Right cardiac atrium (tissue), 5 donors: ENCODE measurements at regions of chr13 and their contacts with region 1.

Region 1: DNA sequence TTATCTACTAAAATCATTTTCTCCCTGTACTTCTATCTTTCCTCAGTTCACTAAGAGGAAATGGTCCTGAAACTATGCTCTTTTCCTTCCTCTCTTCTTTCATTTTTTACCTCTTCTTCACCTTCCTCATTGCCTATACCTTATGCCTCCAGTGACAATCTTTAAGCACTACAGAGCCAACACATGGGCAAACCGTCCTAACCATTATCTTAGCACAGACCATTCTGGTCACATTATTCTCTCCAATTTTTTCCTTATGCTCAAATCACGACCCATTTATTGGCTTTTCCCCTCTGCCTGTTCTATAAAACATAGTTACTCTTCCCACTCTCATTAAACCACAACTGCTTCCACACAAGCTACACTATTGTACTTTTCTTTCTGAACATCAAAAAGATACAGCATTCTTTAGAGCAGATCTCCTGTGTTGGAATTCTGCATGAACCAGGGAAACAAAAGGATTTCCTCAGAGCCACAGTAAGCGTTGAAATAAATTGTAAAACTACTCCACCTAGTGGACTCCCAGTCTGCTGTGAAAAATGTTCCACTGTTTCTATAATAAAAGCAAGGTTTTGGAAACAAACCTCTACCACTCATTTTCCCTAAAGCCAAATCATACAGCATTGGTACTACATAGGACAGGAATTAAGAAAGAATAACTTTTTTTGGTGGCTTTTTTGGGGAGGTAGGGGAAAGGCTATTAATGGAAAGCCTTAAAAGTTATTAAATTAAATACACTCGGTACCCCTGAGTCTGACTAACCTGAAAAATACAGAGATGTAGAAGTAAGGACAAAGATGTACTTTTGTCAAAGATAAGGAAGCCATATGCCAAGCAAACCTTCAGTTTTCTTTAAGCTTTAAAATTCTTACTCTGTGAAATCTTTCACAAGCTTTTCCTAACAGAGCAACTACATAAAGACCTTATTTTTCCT is 19.5 kb downstream of the NUFIP1 start:
- DNase-seq: no peak
- ATAC-seq: peak; percentile 65 to 76
- H3K4me3 ChIP-seq: no peak overlapping the region
- H3K27ac ChIP-seq: no peak overlapping the region
- H3K4me1 ChIP-seq: no peaks in the 10 kb centered on the region
- H3K27me3 ChIP-seq: no peaks in the 10 kb centered on the region

Region 2: GRCh38 chr13:43905435-43906031 is 1064.3 kb before region 1 on chr13:
- intact Hi-C with region 1: loop called in 1 of 4 experiments (anchors 10 kb)
- DNase-seq: no peak
- ATAC-seq: peak; percentile 64 to 69
- H3K4me3 ChIP-seq: no peak overlapping the region
- H3K27ac ChIP-seq: no peak overlapping the region
- H3K4me1 ChIP-seq: no peaks in the 10 kb centered on the region
- H3K27me3 ChIP-seq: no peaks in the 10 kb centered on the region

Region 3: DNA sequence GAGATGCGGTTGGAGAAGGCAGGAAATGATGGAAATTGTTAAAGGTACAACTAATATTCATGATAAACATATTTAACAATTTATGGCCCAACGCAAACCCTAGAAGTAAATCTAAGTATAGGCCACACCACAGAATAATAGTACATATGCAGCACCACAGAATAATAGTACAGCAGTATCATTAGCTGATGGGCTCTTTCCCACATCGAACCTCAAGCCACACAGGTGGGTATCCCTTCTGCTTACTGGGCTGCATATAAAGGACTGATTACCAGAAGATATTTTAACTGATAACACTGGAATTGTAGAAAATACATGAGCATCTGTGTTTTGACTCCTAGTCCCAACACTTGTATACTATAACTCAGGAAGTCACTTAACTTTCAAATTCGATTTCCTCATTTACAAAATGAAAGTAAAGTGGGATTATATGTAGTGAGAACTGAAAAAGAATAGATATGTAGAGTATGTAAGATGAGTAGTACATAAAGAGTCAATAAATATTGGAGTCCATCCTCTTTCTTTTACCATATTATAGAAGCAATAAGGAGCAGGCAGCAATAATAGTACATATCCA is 485.2 kb before region 1 on chr13:
- intact Hi-C with region 1: loop called (anchors 5 to 10 kb)
- DNase-seq: no peak
- ATAC-seq: no peak
- H3K4me3 ChIP-seq: no peak overlapping the region
- H3K27ac ChIP-seq: no peak overlapping the region
- H3K4me1 ChIP-seq: no peaks in the 10 kb centered on the region
- H3K27me3 ChIP-seq: no peaks in the 10 kb centered on the region

Region 4: DNA sequence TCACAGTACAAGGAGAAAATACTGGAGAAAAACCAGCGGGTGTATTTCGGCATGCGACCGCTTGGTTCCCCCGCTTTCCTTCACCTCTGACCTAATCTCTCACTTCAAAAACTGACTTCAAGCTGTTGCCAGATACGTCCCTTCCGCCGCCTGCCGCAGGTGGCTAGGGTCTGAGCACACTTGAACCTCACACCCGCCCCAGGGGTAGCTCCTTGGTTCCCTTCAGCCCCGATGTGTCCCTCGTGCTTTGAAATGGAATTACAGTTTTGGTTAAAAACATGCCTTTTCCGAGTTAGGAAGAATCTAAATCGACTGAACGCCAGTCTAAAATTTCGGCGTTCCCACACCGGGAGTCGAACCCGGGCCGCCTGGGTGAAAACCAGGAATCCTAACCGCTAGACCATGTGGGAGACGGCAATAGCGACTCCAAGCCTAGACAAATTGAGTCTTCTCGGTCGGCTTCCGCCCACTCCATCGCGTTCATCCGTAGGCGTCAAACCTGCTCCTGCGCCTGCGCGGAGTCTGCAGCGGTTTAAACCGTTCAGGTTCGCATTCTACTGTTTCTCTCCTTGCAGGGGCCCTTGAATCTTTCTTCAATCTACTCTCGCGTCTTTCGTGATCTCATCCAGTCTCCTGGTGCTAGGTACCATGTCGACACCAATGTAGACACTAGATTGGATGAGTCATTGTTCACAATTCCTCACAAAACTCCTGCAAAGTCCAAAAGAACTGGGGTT is 52.1 kb before region 1 on chr13:
- intact Hi-C with region 1: no loop called
- DNase-seq: peak; percentile 94 to 98 (median 98)
- ATAC-seq: peak; percentile 87 to 92
- H3K4me3 ChIP-seq: peak overlapping the region; percentile 50
- H3K27ac ChIP-seq: peak overlapping the region; percentile 97
- H3K4me1 ChIP-seq: peaks cover 3% of the 10 kb centered on the region
- H3K27me3 ChIP-seq: no peaks in the 10 kb centered on the region

Region 5: GRCh38 chr13:45301243-45301642 is 331.4 kb after region 1 on chr13:
- intact Hi-C with region 1: loop called in 1 of 4 experiments (anchors 10 kb)
- DNase-seq: no peak
- ATAC-seq: no peak
- H3K4me3 ChIP-seq: no peak overlapping the region
- H3K27ac ChIP-seq: no peak overlapping the region
- H3K4me1 ChIP-seq: no peaks in the 10 kb centered on the region
- H3K27me3 ChIP-seq: no peaks in the 10 kb centered on the region